ENCODE measurements at regions of chr17 and their contacts with region 1.

Region 1: GRCh38 chr17:2029911-2030778 is at the start of gene DPH1:
- DNase-seq: peak; percentile 62 to 93 (median 87)
- ATAC-seq: peak; percentile 92
- H3K4me3 ChIP-seq: peak within 1 kb of the TSS; percentile 80 to 99
- H3K27ac ChIP-seq: peak within 1 kb of the TSS; percentile 6 to 71
- H3K4me1 ChIP-seq: peaks cover 11 to 27% of the 10 kb centered on the region in 2 donors
- H3K27me3 ChIP-seq: peaks cover 6 to 52% of the 10 kb centered on the region in 2 donors
- CTCF ChIP-seq: no peak
- polyA plus RNA-seq, gene DPH1: 34.3 to 53.3 (median 48.1) TPM

Region 2: GRCh38 chr17:1898332-1898731 is 131.8 kb before region 1 on chr17:
- intact Hi-C with region 1: no loop called
- DNase-seq: no peak
- ATAC-seq: no peak
- H3K4me3 ChIP-seq: no peak overlapping the region
- H3K27ac ChIP-seq: no peak overlapping the region
- H3K4me1 ChIP-seq: no peaks in the 10 kb centered on the region
- H3K27me3 ChIP-seq: no peaks in the 10 kb centered on the region
- CTCF ChIP-seq: no peak

Region 3: GRCh38 chr17:1908699-1909309 is 121.3 kb before region 1 on chr17:
- intact Hi-C with region 1: loop called in 1 of 2 experiments (anchors 5 kb)
- DNase-seq: peak; percentile 36 to 87 (median 71)
- ATAC-seq: peak; percentile 96
- H3K4me3 ChIP-seq: peak overlapping the region in 1 of 2 donors; percentile 10
- H3K27ac ChIP-seq: no peak overlapping the region
- H3K4me1 ChIP-seq: peaks cover 4 to 14% of the 10 kb centered on the region in 2 donors
- H3K27me3 ChIP-seq: peaks cover 48 to 98% of the 10 kb centered on the region in 2 donors
- CTCF ChIP-seq: peak; percentile 66 to 70

Region 4: GRCh38 chr17:2137342-2138098 is 107.4 kb after region 1 on chr17:
- intact Hi-C with region 1: no loop called
- DNase-seq: no peak
- ATAC-seq: peak; percentile 72
- H3K4me3 ChIP-seq: no peak overlapping the region
- H3K27ac ChIP-seq: peak overlapping the region; percentile 22 to 67
- H3K4me1 ChIP-seq: peaks cover 23 to 36% of the 10 kb centered on the region in 2 donors
- H3K27me3 ChIP-seq: no peaks in the 10 kb centered on the region
- CTCF ChIP-seq: no peak